A549 (cell line): ENCODE measurements at regions of chr6 and their contacts with region 1.

Region 1: GRCh38 chr6:138007014-138007472 is 100.2 kb downstream of the PERP start:
- DNase-seq: peak; percentile 38 to 46
- ATAC-seq: peak; percentile 57 to 81; a peak in 4 of 6 replicates
- H3K4me3 ChIP-seq: no peak overlapping the region
- H3K27ac ChIP-seq: peak overlapping the region; percentile 20 to 69; a peak in 5 of 6 replicates
- H3K4me1 ChIP-seq: peaks cover 26% of the 10 kb centered on the region
- CTCF ChIP-seq: peak; percentile 54
- EP300 ChIP-seq: no peak
- POLR2A ChIP-seq: no peak
- RAD21 ChIP-seq: peak; percentile 30 to 34; a peak in 2 of 5 replicates

Region 2: GRCh38 chr6:137995371-137995770 is 11.7 kb before region 1 on chr6:
- CTCF ChIA-PET with region 1: interaction called, 10 read pairs
- POLR2A ChIA-PET with region 1: no interaction called
- DNase-seq: no peak
- ATAC-seq: no peak
- H3K4me3 ChIP-seq: no peak overlapping the region
- H3K27ac ChIP-seq: no peak overlapping the region
- H3K4me1 ChIP-seq: no peaks in the 10 kb centered on the region
- CTCF ChIP-seq: no peak
- EP300 ChIP-seq: no peak
- POLR2A ChIP-seq: no peak
- RAD21 ChIP-seq: no peak

Region 3: DNA sequence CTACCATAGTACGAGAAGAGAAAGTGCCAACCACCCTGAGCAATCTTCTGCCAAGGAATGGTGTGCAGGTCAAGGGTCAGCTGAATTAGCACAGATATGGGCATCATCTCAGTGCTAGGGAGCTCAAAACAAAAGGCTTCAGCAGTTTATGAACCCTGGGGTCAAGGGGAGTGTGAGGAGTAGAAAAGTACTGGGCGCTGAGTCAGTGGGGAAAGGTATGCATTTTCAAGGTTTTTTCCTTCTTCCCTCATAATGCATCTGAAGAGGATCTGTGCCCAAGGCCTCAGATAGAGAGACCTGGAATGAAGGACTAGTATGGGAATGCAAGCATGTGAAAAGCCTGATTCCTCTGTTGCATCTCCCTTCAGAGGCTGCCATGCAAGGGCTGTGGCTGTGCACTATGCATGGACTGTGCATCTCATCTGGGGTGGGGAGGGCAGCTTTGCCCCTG is 18.5 kb after region 1 on chr6:
- CTCF ChIA-PET with region 1: interaction called, 14 read pairs
- POLR2A ChIA-PET with region 1: no interaction called
- DNase-seq: no peak
- ATAC-seq: no peak
- H3K4me3 ChIP-seq: no peak overlapping the region
- H3K27ac ChIP-seq: no peak overlapping the region
- H3K4me1 ChIP-seq: no peaks in the 10 kb centered on the region
- CTCF ChIP-seq: no peak
- EP300 ChIP-seq: no peak
- POLR2A ChIP-seq: no peak
- RAD21 ChIP-seq: no peak